ENCODE measurements at regions of chr14 and their contacts with region 1.

Region 1: GRCh38 chr14:74905375-74906142 is 17.5 kb downstream of the RPS6KL1 start:
- DNase-seq: peak; percentile 88
- ATAC-seq: peak; percentile 79
- H3K4me3 Mint-ChIP-seq: no peak overlapping the region
- H3K27ac Mint-ChIP-seq: peak overlapping the region; percentile 63
- H3K4me1 Mint-ChIP-seq: no peaks in the 10 kb centered on the region
- H3K27me3 Mint-ChIP-seq: no peaks in the 10 kb centered on the region

Region 2: GRCh38 chr14:74867673-74868072 is 37.9 kb before region 1 on chr14:
- CTCF ChIA-PET with region 1: interaction called, 250 read pairs
- POLR2A ChIA-PET with region 1: no interaction called
- intact Hi-C with region 1: no loop called
- DNase-seq: peak; percentile 79
- ATAC-seq: peak; percentile 96
- H3K4me3 Mint-ChIP-seq: peak overlapping the region; percentile 3
- H3K27ac Mint-ChIP-seq: peak overlapping the region; percentile 14
- H3K4me1 Mint-ChIP-seq: peaks cover 19% of the 10 kb centered on the region
- H3K27me3 Mint-ChIP-seq: no peaks in the 10 kb centered on the region

Region 3: DNA sequence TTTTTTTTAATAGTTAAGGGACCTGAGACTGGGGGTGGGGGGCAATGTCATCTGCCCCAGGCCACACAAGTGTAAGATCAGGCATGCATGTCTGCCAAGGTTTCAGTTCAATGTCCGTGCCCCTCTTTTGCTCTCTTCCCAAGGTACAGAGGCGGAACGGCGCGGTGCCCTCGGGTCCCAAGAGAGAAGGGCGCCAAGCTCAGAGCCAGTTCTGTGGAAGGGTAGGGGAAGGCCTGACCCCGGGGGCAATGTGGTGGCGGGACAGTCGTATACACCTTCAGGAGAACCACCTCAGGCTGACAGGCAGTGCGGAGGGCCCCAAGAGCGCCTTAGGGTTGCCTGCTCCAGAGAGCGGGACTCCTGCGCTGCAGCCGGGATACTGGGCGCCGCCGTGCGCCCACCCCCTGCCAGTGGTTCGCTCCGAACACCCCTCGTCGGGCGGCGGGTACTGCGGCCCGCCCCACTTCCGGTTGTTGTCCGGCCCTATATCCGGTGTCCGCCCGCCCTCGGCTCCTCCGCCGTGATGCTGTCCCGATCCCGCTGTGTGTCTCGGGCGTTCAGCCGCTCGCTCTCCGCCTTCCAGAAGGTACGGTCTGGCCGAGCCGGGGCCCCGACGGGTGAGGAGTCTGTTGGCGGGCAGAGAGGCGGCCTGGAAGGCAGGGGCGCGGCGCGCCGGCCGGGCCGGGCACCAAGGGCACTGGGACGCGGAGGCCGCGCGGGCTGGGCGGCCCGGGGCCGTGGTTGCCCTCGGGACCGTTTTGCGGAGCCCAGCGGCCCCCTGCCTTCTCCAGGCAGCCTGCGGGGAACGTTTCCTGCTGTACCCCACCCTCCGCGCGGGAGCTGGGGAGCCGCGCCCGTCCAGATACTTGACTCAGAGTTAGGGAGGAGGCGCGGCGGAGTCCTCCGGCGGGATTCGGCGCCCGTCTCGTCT is 23.9 kb before region 1 on chr14 and contains the start of gene DLST:
- CTCF ChIA-PET with region 1: interaction called, 98 read pairs
- POLR2A ChIA-PET with region 1: interaction called, 3 read pairs
- intact Hi-C with region 1: no loop called
- DNase-seq: peak; percentile 92
- ATAC-seq: peak; percentile 89
- H3K4me3 Mint-ChIP-seq: peak within 1 kb of the TSS; percentile 99
- H3K27ac Mint-ChIP-seq: peak within 1 kb of the TSS; percentile 96
- H3K4me1 Mint-ChIP-seq: peaks cover 64% of the 10 kb centered on the region
- H3K27me3 Mint-ChIP-seq: no peaks in the 10 kb centered on the region
- total RNA-seq, gene DLST: 103 to 120 TPM

Region 4: GRCh38 chr14:74888164-74889158 is 17.1 kb before region 1 on chr14:
- CTCF ChIA-PET with region 1: interaction called, 98 read pairs
- POLR2A ChIA-PET with region 1: no interaction called
- intact Hi-C with region 1: no loop called
- DNase-seq: no peak
- ATAC-seq: no peak
- H3K4me3 Mint-ChIP-seq: no peak overlapping the region
- H3K27ac Mint-ChIP-seq: peak overlapping the region; percentile 52
- H3K4me1 Mint-ChIP-seq: peaks cover 38% of the 10 kb centered on the region
- H3K27me3 Mint-ChIP-seq: no peaks in the 10 kb centered on the region

Region 5: DNA sequence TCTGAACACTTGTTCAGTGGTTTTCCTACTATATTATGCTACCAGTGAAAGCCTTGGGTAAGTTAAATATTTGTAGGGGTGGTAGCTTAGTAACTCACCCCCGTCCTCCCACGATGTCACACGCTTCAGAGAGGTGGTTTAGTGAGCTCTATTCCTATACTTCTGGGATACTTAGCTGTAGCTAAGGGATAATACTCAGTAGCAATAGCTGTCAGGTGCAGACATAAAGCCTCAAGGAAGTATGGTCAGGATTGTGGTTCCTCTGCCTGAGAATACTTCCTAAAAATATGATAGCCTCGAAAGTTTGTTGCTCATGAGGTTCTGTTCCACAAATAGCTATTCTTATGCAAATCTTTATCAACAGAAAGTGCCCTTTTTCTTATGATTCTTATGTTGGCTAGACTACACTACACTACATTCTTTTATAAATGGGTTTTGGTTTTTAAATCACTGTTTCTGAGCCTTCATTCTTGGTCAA is 11.9 kb before region 1 on chr14:
- CTCF ChIA-PET with region 1: interaction called, 28 read pairs
- POLR2A ChIA-PET with region 1: no interaction called
- intact Hi-C with region 1: no loop called
- DNase-seq: no peak
- ATAC-seq: no peak
- H3K4me3 Mint-ChIP-seq: no peak overlapping the region
- H3K27ac Mint-ChIP-seq: peak overlapping the region; percentile 12
- H3K4me1 Mint-ChIP-seq: no peaks in the 10 kb centered on the region
- H3K27me3 Mint-ChIP-seq: no peaks in the 10 kb centered on the region

Region 6: DNA sequence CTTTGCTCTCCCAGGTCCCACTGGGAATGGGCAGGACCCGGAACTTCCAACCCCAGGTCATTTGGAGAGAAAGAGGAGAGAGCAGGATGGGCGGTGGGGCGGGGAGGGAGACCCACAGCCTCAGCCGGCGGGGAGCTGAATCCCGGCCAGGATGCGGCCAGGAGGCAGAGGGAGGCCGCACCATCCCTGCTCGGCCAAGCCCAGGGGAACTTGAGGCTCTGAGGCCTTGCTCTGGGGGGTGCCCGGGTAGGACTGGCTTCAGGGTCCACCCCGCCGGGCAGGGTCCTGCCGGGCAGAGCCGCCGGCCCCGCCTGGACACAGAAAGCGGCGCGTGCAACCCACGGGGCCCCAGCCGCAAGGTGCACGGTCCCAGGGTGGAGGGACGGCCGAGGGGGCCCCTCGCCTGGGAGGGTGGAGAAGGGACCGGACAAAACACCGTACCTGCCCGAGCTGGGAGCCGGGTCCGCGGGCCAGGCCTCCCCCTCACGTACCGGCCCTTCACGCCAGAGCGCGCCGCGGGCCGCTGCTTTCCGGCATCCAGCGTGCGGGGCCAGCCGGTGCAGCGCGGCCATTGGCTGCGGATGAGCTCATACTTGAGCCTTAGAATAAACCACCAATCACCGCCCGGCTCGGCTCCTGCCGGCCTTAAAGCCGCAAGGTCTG is 17.3 kb after region 1 on chr14 and contains the start of gene RPS6KL1:
- CTCF ChIA-PET with region 1: interaction called, 23 read pairs
- POLR2A ChIA-PET with region 1: interaction called, 4 read pairs
- intact Hi-C with region 1: no loop called
- DNase-seq: peak; percentile 86
- ATAC-seq: peak; percentile 99
- H3K4me3 Mint-ChIP-seq: peak within 1 kb of the TSS; percentile 66
- H3K27ac Mint-ChIP-seq: peak within 1 kb of the TSS; percentile 39
- H3K4me1 Mint-ChIP-seq: peaks cover 10% of the 10 kb centered on the region
- H3K27me3 Mint-ChIP-seq: peaks cover 6% of the 10 kb centered on the region
- total RNA-seq, gene RPS6KL1: 5.6 to 6.0 TPM

Measured in activated CD4-positive, alpha-beta T cell treated with anti-CD3 and anti-CD28 coated beads for 36 hours (primary cell).